ENCODE measurements at regions of chr4 and their contacts with region 1.

Region 1: DNA sequence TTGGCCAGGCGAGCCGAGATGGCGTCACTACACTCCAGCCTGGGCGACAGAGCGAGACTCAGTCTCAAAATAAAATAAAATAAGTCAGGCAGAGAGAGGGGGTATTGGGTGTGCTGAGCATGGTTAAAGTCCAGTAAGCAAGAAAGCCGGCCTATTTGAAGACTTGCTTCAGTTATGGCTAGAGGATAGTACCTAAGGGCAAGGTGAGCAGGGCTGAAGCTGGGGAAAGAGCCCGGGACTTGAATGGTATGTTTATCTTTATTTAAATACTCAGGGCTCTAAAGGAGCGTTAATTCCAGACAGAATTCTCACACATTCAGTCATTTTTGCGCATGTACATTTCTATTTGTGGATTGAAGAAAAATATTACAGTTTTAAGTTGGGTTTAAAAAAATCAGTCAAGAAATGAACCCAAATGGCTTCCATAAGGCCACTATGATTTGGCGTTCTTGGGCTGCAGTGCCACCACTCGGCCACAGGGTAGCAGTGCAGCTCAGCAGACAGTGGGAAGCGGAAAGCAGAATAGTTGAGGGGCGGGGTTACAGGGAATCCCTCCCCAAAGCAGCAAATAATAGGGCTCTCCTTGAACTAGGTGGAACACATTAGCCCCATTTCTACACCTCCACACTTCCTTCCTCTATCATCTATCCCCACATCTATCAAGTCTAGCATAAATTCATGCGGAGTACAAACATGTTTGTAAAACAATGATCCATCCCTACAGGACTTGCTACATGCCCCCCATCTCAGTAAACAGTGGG is 37.2 kb upstream of the SH3D19 start:
- DNase-seq: peak; percentile 12 to 90
- H3K4me3 ChIP-seq: no peak overlapping the region
- H3K27ac ChIP-seq: no peak overlapping the region
- H3K4me1 ChIP-seq: no peaks in the 10 kb centered on the region
- H3K27me3 ChIP-seq: no peaks in the 10 kb centered on the region
- CTCF ChIP-seq: peak; percentile 86 to 98 (median 98)

Region 2: GRCh38 chr4:151117371-151117962 is 245.1 kb before region 1 on chr4:
- intact Hi-C with region 1: loop called (anchors 2 kb)
- DNase-seq: peak in 1 of 2 donors; percentile 73
- H3K4me3 ChIP-seq: no peak overlapping the region
- H3K27ac ChIP-seq: peak overlapping the region; percentile 5 to 74
- H3K4me1 ChIP-seq: no peaks in the 10 kb centered on the region
- H3K27me3 ChIP-seq: no peaks in the 10 kb centered on the region
- CTCF ChIP-seq: peak; percentile 56 to 69 (median 59)

Region 3: GRCh38 chr4:151276787-151277562 is 85.6 kb before region 1 on chr4 and contains the start of gene PRSS48:
- intact Hi-C with region 1: loop called (anchors 1 kb)
- DNase-seq: peak in 1 of 2 donors; percentile 65
- H3K4me3 ChIP-seq: no peak within 1 kb of the TSS
- H3K27ac ChIP-seq: no peak within 1 kb of the TSS
- H3K4me1 ChIP-seq: no peaks in the 10 kb centered on the region
- H3K27me3 ChIP-seq: no peaks in the 10 kb centered on the region
- CTCF ChIP-seq: peak in 2 of 3 experiments; percentile 59 to 66
- total RNA-seq, gene PRSS48: not detected

Region 4: GRCh38 chr4:151604238-151604637 is 241.7 kb after region 1 on chr4:
- intact Hi-C with region 1: loop called (anchors 10 kb)
- DNase-seq: no peak
- H3K4me3 ChIP-seq: no peak overlapping the region
- H3K27ac ChIP-seq: no peak overlapping the region
- H3K4me1 ChIP-seq: no peaks in the 10 kb centered on the region
- H3K27me3 ChIP-seq: no peaks in the 10 kb centered on the region
- CTCF ChIP-seq: peak in 1 of 3 experiments; percentile 5

Measured in ascending aorta (tissue), 2 donors.